ENCODE measurements at regions of chr18 and their contacts with region 1.

Region 1: DNA sequence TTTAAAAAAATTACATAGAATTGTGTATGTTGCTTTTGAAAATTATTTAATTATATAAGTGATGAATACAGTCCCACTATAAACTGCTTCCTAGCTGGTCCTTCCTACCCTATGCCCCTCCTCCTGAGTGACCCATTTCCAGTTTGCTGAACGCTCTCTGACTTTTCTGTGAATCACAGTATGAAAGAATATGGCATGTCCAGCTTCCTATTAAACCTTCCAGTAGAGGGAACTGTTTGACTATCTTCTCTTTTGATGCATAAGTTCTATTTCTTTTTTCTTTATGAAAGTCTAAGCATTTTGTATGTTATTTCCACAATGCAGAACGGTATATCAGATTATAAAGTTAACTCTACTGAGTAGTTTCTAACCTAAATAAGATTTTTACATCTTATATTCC is 41.3 kb downstream of the PSMG2 start:
- DNase-seq: peak; percentile 66
- H3K4me3 ChIP-seq: no peak overlapping the region
- H3K27ac ChIP-seq: no peak overlapping the region
- H3K4me1 ChIP-seq: no peaks in the 10 kb centered on the region; a peak in 2 of 4 replicates
- H3K27me3 ChIP-seq: no peaks in the 10 kb centered on the region
- CTCF ChIP-seq: peak; percentile 77
- EP300 ChIP-seq: no peak
- RAD21 ChIP-seq: peak; percentile 84

Region 2: DNA sequence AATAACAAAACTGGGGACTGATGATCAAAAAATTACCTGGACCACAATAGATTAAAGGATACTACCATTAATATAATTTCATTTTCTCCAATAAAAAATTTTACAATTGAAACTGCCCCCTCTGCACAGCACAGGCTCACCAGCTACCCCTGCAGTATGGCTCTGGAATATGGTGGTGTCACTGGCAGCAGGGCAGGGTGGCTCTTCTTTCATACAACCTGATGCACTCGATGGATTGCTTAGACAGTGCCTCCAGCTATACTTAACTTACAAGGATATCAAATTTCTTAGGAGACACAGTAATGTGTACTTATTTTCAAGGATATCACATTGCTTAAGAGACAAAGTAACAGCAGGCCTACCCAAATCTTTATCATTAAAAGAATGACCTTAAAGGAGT is 212.4 kb before region 1 on chr18:
- CTCF ChIA-PET with region 1: no interaction called
- POLR2A ChIA-PET with region 1: no interaction called
- DNase-seq: no peak
- H3K4me3 ChIP-seq: no peak overlapping the region
- H3K27ac ChIP-seq: no peak overlapping the region
- H3K4me1 ChIP-seq: peaks cover 0 to 4% of the 10 kb centered on the region in 2 experiments; a peak in 1 of 4 replicates
- H3K27me3 ChIP-seq: no peaks in the 10 kb centered on the region
- CTCF ChIP-seq: no peak
- EP300 ChIP-seq: no peak
- RAD21 ChIP-seq: no peak

Region 3: DNA sequence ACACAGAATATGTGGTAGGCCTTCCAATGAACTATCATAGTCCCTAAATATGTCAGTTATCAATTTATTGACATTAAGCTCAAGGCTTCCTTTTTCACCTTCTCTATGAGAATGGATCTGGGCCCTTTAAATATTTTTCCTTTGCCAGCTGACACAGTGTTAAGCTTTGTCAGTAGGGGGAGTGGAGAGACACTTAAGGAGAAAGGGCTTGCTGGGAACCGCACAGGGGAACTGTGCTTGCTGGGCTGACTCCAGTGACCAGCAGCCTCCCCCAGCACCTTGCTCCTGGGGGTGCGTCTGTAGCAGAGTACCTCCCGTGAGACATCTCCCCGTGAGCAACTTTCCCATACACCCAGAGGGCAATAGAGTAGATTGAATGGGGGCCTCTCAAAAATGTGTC is 146.4 kb after region 1 on chr18:
- CTCF ChIA-PET with region 1: interaction called, 24 read pairs
- POLR2A ChIA-PET with region 1: interaction called, 3 read pairs
- DNase-seq: no peak
- H3K4me3 ChIP-seq: no peak overlapping the region
- H3K27ac ChIP-seq: no peak overlapping the region
- H3K4me1 ChIP-seq: no peaks in the 10 kb centered on the region; a peak in 1 of 4 replicates
- H3K27me3 ChIP-seq: no peaks in the 10 kb centered on the region
- CTCF ChIP-seq: 0 out of 2 replicates have a peak, but pooled peaks have one; percentile 7
- EP300 ChIP-seq: no peak
- RAD21 ChIP-seq: no peak